ENCODE measurements at regions of chr20 and their contacts with region 1.

Region 1: DNA sequence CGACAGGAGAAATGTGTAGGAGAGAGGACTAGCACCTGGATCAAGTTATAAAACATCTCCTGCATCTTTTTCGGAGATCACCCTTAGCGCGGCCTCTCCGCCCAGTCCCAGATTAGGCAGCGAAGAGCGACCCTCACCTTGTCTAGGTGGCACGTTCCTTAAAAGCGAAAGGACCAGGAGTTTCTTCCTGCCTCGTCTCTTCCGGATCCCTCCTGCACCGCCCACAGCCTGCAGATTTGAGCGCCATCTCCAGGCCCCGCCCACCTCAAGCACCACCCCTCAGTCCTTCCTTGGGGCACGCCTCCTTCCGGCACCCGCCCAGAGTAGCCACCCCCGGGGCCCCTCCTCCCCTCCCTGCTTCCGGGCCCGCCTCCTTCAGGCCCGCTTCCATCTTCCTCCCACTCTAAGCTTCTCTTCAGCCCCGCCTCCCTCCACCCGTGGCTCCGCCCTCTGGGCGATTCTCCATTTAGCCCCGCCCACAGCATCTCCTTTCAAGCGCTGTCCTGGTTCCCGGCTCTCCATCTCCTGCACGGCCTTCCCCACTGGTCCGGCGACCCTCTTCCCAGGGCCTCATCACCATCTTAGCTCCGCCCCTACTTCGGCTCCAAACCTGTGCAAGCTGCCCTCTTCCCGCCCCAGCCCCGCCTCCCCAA is 662 bp upstream of the RALY start:
- DNase-seq: peak; percentile 99 to 100
- H3K4me3 ChIP-seq: peak overlapping the region; percentile 96 to 99
- H3K27ac ChIP-seq: peak overlapping the region; percentile 98 to 99
- H3K4me1 ChIP-seq: peaks cover 0 to 54% (median 41%) of the 10 kb centered on the region in 4 donors
- H3K27me3 ChIP-seq: no peaks in the 10 kb centered on the region
- CTCF ChIP-seq: no peak

Region 2: DNA sequence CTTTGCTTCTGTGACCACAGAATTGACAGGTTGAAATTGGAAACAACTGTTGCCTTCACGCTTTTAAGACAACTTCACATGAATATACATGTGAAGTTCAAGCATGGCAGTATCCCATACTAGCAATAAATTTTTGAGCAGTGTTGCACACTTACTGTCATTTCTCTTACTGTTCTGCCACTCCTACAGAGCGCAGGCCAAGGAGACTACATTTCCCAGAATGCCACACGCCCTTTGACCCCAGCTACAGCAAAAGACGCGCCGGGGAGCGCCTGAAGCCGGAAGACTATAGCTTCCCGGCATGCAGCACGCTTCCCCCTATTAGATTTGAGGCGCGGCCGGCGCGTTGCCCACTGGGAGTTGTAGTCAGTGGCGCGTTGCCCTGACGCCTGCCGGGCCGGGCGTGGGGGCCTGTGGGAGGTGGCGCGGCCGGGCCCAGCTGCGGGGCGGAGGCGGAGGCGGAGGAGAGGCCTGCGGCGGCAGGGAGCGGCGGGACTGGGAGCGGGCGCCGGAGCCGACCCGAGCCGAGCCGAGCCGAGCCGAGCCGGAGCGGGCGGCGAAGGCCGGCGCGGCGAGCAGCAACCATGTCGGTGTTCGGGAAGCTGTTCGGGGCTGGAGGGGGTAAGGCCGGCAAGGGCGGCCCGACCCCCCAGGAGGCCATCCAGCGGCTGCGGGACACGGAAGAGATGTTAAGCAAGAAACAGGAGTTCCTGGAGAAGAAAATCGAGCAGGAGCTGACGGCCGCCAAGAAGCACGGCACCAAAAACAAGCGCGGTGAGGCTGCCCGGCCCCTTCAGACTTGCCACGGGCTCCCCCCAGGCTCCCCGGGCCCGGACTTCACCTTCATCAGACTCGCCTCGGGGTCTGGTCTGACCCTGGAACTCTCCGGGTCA is 181.9 kb before region 1 on chr20 and contains the start of gene CHMP4B:
- intact Hi-C with region 1: loop called (anchors 10 kb)
- DNase-seq: peak; percentile 100
- H3K4me3 ChIP-seq: peak within 1 kb of the TSS; percentile 85 to 97
- H3K27ac ChIP-seq: peak within 1 kb of the TSS; percentile 93 to 95
- H3K4me1 ChIP-seq: peaks cover 0 to 34% (median 22%) of the 10 kb centered on the region in 4 donors
- H3K27me3 ChIP-seq: no peaks in the 10 kb centered on the region
- CTCF ChIP-seq: no peak

Region 3: DNA sequence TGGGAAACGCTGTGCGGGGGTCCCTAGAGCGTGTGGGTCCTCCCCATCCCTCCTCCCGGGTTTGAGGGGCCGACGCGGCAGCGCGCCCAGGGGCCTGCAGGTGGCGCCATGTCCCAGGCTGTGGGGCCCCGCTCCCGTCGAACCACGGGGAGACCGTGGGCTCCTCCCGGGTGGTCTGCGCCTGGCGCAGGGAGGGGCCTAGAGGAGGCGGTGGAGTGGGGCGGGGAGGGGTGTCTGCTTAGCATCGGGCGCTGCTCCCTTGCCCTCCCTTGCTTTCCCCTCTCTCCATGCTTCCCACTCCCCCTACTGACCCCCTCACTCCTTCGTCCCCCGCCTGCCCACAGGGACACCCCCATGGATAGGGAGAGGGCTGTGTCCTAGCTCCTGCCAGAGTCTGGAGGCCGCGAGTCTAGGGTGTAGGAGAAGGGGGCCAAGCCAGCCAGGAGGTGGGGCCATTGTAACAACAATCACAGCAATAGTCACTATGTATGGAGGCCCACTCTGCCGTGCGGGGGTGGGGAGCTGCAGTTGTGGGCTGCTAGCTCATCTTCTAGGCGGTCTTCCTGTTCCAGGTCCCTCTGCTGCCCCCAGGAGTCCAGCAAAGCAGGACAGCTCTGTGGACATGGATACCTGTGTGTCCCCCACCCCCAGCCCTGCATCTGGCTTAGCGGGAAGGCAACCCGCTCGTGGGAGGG is 130.2 kb before region 1 on chr20:
- intact Hi-C with region 1: no loop called
- DNase-seq: peak; percentile 31 to 69
- H3K4me3 ChIP-seq: no peak overlapping the region
- H3K27ac ChIP-seq: no peak overlapping the region
- H3K4me1 ChIP-seq: peaks cover 0 to 8% (median 6%) of the 10 kb centered on the region in 4 donors
- H3K27me3 ChIP-seq: no peaks in the 10 kb centered on the region
- CTCF ChIP-seq: peak; percentile 61 to 63

Region 4: DNA sequence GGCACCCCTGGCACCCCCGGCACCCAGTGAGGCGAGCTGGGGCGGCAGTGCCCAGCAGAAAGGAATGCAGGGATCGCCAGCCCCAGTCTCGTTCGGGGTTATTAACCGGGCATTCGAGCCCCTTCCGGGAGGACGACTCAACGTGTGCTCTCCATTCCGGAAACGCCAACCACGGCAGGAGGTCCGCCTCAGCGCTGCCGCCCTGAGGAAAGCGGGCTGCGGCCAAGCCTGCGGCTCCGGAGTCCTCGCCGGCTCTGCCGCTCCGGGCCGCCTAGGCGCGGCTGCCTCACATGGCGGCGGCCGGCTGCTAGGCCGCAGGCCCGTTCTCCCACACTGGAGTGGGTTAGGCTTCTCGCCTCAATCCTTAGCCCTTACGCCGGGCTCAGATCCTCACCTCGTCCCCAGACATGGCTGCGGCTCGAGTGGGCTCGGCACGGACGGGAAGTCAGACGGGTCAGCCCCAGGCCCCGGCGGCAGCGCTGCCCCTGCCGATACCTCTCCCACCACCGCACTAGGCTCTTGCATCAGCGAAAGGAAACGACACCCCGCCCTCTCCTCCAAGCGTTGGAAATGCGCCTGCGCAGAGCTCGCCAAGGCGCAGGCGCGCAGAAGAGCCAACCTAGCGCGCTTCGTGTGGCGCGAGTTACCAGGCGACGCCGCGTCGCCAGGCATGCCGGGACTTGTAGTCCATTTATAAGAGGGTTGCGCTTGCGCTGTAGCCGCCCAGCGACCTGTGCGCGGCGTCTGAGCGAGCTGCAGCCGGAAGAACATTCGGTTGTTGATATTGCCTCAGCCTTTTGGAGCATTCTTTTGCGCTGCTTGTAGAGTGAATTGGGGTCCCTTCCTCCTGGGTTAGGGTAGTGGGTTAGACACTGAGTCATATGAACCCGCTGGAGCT is 118.9 kb after region 1 on chr20 and contains the start of gene EIF2S2:
- intact Hi-C with region 1: loop called (anchors 10 kb)
- DNase-seq: peak; percentile 95 to 98
- H3K4me3 ChIP-seq: peak within 1 kb of the TSS; percentile 78 to 87
- H3K27ac ChIP-seq: peak within 1 kb of the TSS; percentile 93 to 96
- H3K4me1 ChIP-seq: peaks cover 0 to 41% (median 21%) of the 10 kb centered on the region in 4 donors
- H3K27me3 ChIP-seq: no peaks in the 10 kb centered on the region
- CTCF ChIP-seq: no peak

Region 5: GRCh38 chr20:34232494-34233087 is 239.5 kb after region 1 on chr20:
- intact Hi-C with region 1: no loop called
- DNase-seq: no peak
- H3K4me3 ChIP-seq: no peak overlapping the region
- H3K27ac ChIP-seq: no peak overlapping the region
- H3K4me1 ChIP-seq: no peaks in the 10 kb centered on the region
- H3K27me3 ChIP-seq: no peaks in the 10 kb centered on the region
- CTCF ChIP-seq: no peak

Measured in tibial artery (tissue), 4 donors.